Calu3 (cell line): ENCODE measurements at regions of chr2 and their contacts with region 1.

Region 1: DNA sequence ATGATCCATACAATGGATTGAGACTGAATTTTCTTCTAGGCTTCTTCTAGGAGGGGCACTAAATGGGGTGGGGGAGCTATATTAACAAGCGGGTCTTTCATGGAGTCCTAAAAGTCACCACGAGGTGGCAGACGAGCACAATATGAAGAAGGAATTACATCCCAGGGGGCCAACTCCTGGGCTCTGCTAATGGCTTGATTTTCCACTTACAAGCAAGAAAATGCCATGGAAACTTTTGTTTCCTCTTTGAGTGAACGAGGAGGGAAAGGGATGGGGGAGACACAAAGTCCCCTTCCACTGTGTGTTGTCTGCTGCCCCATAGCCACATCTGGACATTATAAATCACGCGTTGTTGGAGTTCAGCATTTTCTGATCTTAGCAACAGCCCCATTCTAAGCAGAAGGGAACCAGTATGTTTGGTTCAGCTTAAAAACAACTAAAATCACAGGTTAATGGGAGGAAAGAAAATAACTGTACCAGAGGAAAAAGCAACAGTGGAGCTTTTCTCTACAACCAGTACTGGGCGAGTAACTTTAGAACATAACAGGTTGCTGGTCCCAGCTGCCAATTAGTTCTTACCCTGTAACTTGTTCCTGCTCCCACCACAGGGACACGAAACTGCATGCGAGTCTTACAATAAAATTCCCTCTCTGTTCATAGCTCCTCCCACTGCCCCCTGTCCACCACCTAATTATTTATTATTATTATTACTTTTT is 285.0 kb upstream of the PARD3B start:
- DNase-seq: peak; percentile 66
- H3K4me3 Mint-ChIP-seq: no peak overlapping the region
- H3K27ac Mint-ChIP-seq: no peak overlapping the region
- H3K4me1 Mint-ChIP-seq: peaks cover 23% of the 10 kb centered on the region
- H3K27me3 Mint-ChIP-seq: no peaks in the 10 kb centered on the region
- CTCF ChIP-seq: peak; percentile 88

Region 2: DNA sequence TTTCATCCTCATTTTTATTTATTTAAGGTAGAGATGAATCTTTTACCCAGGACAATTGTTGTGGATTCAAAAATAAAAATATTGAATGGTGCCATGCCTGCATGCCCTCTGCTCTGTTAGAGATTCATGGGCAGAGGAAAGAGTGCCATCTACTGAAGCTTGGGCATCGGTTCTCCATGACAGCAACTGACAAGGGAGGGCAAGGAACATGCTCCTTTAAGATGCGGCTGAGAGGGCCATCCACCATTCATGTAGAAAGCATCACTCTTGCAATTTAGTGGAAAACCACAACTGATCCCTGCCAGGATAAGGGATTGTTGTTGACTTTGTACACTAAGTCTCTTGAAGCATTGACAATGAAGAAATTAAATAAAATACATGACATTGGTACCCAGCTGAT is 364.8 kb after region 1 on chr2:
- CTCF ChIA-PET with region 1: no interaction called
- intact Hi-C with region 1: loop called (anchors 2 kb)
- DNase-seq: peak; percentile 24
- H3K4me3 Mint-ChIP-seq: no peak overlapping the region
- H3K27ac Mint-ChIP-seq: no peak overlapping the region
- H3K4me1 Mint-ChIP-seq: no peaks in the 10 kb centered on the region
- H3K27me3 Mint-ChIP-seq: no peaks in the 10 kb centered on the region
- CTCF ChIP-seq: peak; percentile 19

Region 3: GRCh38 chr2:204691911-204692510 is 431.7 kb after region 1 on chr2:
- CTCF ChIA-PET with region 1: interaction called, 15 read pairs
- intact Hi-C with region 1: loop called (anchors 1 kb)
- DNase-seq: peak; percentile 63
- H3K4me3 Mint-ChIP-seq: no peak overlapping the region
- H3K27ac Mint-ChIP-seq: no peak overlapping the region
- H3K4me1 Mint-ChIP-seq: peaks cover 8% of the 10 kb centered on the region
- H3K27me3 Mint-ChIP-seq: no peaks in the 10 kb centered on the region
- CTCF ChIP-seq: peak; percentile 57